Right cardiac atrium (tissue), 5 donors: ENCODE measurements at regions of chr19 and their contacts with region 1.

Region 1: GRCh38 chr19:14147797-14148605 is 11.6 kb upstream of the ASF1B start:
- DNase-seq: peak; percentile 82 to 93 (median 92)
- ATAC-seq: peak; percentile 81 to 82
- H3K4me3 ChIP-seq: no peak overlapping the region
- H3K27ac ChIP-seq: peak overlapping the region; percentile 26
- H3K4me1 ChIP-seq: peaks cover 5% of the 10 kb centered on the region
- H3K27me3 ChIP-seq: no peaks in the 10 kb centered on the region

Region 2: GRCh38 chr19:13905938-13906904 is 241.8 kb before region 1 on chr19 and contains the starts of genes BRME1 and CC2D1A:
- intact Hi-C with region 1: loop called in 1 of 4 experiments (anchors 10 kb)
- DNase-seq: peak; percentile 95 to 98 (median 98)
- ATAC-seq: peak; percentile 99
- H3K4me3 ChIP-seq: peak within 1 kb of the TSS; percentile 61
- H3K27ac ChIP-seq: no peak within 1 kb of the TSS
- H3K4me1 ChIP-seq: peaks cover 3% of the 10 kb centered on the region
- H3K27me3 ChIP-seq: no peaks in the 10 kb centered on the region
- total RNA-seq, gene BRME1: 0.40 to 1.2 (median 0.80) TPM
- total RNA-seq, gene CC2D1A: 21.6 to 26.2 (median 22.3) TPM

Region 3: DNA sequence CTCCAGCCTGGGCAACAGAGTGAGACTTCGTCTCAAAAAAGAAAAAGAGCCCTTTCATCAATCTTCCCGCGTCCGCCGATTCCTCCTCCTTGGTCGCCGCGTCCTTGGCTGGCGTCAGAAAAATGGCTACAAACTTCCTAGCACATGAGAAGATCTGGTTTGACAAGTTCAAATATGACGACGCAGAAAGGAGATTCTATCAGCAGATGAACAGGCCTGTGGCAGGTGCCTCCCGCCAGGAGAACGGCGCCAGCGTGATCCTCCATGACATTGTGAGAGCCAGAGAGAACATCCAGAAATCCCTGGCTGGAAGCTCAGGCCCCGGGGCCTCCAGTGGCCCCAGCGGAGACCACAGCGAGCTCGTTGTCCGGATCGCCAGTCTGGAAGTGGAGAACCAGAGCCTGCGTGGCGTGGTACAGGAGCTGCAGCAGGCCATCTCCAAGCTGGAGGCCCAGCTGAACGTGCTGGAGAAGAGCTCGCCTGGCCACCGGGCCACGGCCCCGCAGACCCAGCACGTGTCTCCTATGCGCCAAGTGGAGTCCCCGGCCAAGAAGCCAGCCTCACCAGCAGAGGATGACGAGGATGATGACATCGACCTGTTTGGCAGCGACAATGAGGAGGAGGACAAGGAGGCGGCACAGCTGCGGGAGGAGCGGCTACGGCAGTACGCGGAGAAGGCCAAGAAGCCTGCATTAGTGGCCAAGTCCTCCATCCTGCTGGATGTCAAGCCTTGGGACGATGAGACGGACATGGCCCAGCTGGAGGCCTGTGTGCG is 77.5 kb before region 1 on chr19:
- intact Hi-C with region 1: no loop called
- DNase-seq: peak; percentile 45 to 69 (median 68)
- ATAC-seq: no peak
- H3K4me3 ChIP-seq: no peak overlapping the region
- H3K27ac ChIP-seq: no peak overlapping the region
- H3K4me1 ChIP-seq: peaks cover 2% of the 10 kb centered on the region
- H3K27me3 ChIP-seq: no peaks in the 10 kb centered on the region

Region 4: DNA sequence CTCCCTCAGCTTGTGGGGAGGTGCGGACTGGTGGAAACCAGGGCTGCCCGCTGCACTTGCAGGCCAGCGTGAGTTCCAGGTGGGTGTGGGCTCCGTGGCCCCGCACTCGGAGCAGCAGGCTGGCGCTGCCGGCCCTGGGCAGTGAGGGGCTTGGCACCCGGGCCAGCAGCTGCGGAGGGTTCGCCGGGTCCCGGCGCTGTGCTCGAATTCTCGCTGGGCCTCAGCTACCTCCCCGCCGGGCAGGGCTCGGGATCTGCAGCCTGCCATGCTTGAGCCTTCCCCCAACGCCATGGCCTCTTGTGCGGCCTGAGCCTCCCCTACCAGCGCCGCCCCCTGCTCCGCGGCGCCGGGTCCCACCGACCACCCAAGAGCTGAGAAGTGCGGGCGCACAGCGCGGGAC is 129.6 kb after region 1 on chr19:
- intact Hi-C with region 1: loop called in 1 of 4 experiments (anchors 10 kb)
- DNase-seq: no peak
- ATAC-seq: no peak
- H3K4me3 ChIP-seq: no peak overlapping the region
- H3K27ac ChIP-seq: no peak overlapping the region
- H3K4me1 ChIP-seq: no peaks in the 10 kb centered on the region
- H3K27me3 ChIP-seq: no peaks in the 10 kb centered on the region

Region 5: DNA sequence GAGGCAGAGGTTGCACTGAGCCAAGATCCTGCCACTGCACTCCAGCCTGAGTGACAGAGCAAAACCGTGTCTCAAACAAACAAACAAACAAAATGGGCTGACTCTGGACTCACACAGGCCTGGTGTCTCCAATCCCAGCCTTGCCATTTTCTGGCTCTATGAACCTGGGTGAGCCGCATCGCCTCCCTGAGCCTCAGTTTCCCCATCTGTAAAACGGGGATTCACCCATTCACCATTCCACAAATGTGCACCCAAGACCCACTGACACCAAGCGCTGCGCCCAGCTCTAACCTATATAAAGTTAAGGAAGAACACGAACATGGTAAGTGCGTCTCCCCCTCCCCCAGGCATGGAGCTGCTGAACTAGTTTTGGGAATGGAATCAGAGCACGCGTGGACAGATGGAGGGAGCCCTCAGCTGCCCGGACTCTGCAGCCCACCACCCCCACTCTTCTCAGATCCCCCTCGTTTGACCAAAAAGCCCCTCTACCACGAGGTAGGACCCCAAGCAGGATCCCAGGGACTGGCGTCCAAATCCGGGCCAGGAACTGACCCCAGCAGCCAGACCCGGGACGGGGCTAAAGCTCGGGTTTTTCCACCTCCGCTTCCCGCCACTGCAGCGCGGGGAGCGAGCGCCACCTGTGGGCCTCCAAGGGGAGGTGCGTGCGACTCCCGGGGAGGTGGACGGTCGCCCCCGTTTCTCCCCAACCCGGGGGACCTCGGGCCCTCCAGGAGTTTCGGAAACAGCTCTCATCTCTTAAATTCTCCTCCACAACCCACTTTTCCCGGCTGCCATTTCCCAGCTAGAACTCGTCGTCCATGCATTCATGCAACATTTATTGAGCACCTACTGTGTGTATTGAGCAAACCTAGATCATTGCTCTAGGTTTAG is 200.2 kb after region 1 on chr19:
- intact Hi-C with region 1: loop called (anchors 5 to 10 kb)
- DNase-seq: peak; percentile 61 to 87 (median 86)
- ATAC-seq: peak; percentile 77 to 87
- H3K4me3 ChIP-seq: no peak overlapping the region
- H3K27ac ChIP-seq: no peak overlapping the region
- H3K4me1 ChIP-seq: no peaks in the 10 kb centered on the region
- H3K27me3 ChIP-seq: no peaks in the 10 kb centered on the region

Region 6: DNA sequence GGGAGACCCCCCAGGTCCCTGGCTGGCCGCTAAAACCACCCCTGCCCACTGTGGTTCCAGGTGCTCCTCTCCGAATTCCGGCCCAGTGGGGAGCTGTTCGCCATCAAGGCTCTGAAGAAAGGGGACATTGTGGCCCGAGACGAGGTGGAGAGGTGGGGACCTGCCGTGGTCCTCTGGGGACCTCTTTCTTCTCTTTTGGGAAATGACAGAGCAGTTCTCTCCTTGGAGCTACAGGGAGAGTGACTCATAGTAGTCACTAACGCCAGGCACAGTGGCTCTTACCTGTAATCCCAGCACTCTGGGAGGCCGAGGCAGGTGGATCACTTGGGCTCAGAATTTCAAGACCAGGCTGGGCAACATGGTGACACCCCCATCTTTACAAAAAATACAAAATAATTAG is 319.8 kb after region 1 on chr19:
- intact Hi-C with region 1: loop called in 1 of 4 experiments (anchors 10 kb)
- DNase-seq: no peak
- ATAC-seq: no peak
- H3K4me3 ChIP-seq: no peak overlapping the region
- H3K27ac ChIP-seq: no peak overlapping the region
- H3K4me1 ChIP-seq: no peaks in the 10 kb centered on the region
- H3K27me3 ChIP-seq: no peaks in the 10 kb centered on the region